ENCODE measurements at regions of chr4 and their contacts with region 1.

Region 1: DNA sequence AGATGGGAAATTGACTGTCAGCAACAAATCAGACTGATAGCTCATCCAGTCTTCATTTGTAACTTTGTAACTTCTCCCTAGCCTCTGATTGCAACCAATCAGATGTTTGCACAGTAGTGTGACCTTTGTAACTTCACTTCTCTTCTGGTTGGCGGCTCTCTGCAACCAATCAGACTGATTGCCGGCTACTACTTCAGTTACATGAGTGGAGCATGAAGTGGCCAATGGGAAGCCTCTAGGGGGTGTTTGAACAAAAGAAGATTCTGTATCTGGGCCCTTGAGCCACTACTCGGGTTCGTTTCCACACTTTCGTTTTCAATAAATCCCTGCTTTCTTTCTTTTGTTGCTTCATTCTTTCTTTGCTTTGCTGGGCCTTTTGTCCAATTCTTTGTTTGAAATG is 1285.8 kb downstream of the TECRL start:
- DNase-seq: no peak
- ATAC-seq: no peak
- H3K4me3 ChIP-seq: no peak overlapping the region
- H3K27ac ChIP-seq: no peak overlapping the region
- H3K4me1 ChIP-seq: no peaks in the 10 kb centered on the region
- H3K27me3 ChIP-seq: no peaks in the 10 kb centered on the region
- CTCF ChIP-seq: no peak
- POLR2A ChIP-seq: no peak

Region 2: GRCh38 chr4:63226236-63226635 is 102.8 kb after region 1 on chr4:
- in situ Hi-C with region 1: loop called in 1 of 4 experiments (anchors 25 kb)
- intact Hi-C with region 1: no loop called
- DNase-seq: no peak
- ATAC-seq: no peak
- H3K4me3 ChIP-seq: no peak overlapping the region
- H3K27ac ChIP-seq: no peak overlapping the region
- H3K4me1 ChIP-seq: no peaks in the 10 kb centered on the region
- H3K27me3 ChIP-seq: no peaks in the 10 kb centered on the region
- CTCF ChIP-seq: no peak
- POLR2A ChIP-seq: no peak

Region 3: DNA sequence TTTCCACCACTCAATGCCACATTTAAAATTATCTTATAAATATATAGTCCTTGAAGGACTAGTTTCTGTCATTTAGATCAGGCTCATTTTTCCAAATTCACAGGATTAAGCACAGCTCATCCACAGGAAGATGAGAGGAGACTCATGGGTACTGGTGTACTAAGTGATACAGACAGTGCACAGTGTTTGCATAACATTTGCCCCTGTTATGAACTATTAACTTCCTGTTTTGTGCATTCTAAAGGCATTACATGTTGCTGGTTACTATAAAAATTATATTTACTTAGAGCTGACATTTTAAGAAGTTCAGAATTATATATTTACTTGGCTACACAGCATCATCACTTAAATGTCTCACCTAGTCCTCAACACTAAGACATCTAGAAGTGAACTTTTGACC is 513.8 kb after region 1 on chr4:
- in situ Hi-C with region 1: no loop called
- intact Hi-C with region 1: no loop called
- DNase-seq: no peak
- ATAC-seq: no peak
- H3K4me3 ChIP-seq: no peak overlapping the region
- H3K27ac ChIP-seq: no peak overlapping the region
- H3K4me1 ChIP-seq: no peaks in the 10 kb centered on the region
- H3K27me3 ChIP-seq: no peaks in the 10 kb centered on the region
- CTCF ChIP-seq: no peak
- POLR2A ChIP-seq: no peak

Measured in gastrocnemius medialis (tissue), 4 donors.